ENCODE measurements at regions of chr19 and their contacts with region 1.

Region 1: DNA sequence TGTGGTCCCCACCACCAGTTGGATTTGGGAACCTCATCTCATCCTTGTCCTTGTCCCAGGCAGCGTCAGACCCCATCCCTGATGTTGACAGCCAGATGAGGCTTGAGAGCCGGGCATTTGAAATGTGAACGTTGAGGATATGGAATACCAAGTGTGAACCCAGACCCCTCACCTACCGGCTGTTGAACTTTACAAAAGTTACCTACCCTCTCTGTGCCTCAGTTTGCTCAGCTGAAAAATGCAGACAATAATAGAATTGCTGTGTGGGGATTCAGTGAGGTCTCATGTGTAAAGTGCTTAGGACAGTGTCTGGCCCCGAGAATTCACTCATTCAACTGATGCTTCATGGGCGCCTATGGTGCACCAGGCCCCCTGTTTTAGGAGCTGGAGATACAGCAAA is 693 bp upstream of the SIGLEC14 start:
- DNase-seq: no peak
- ATAC-seq: no peak
- H3K4me3 ChIP-seq: no peak overlapping the region
- H3K4me3 Mint-ChIP-seq: no peak overlapping the region
- H3K27ac ChIP-seq: peak overlapping the region; percentile 20
- H3K27ac Mint-ChIP-seq: no peak overlapping the region
- H3K4me1 ChIP-seq: peaks cover 29% of the 10 kb centered on the region
- H3K4me1 Mint-ChIP-seq: peaks cover 0 to 7% of the 10 kb centered on the region in 2 donors
- H3K27me3 ChIP-seq: no peaks in the 10 kb centered on the region
- H3K27me3 Mint-ChIP-seq: peaks cover 20 to 40% of the 10 kb centered on the region in 2 donors
- CTCF ChIP-seq: no peak

Region 2: GRCh38 chr19:51627491-51628138 is 19.7 kb before region 1 on chr19:
- intact Hi-C with region 1: loop called (anchors 2 kb)
- DNase-seq: no peak
- ATAC-seq: no peak
- H3K4me3 ChIP-seq: no peak overlapping the region
- H3K4me3 Mint-ChIP-seq: no peak overlapping the region
- H3K27ac ChIP-seq: no peak overlapping the region
- H3K27ac Mint-ChIP-seq: no peak overlapping the region
- H3K4me1 ChIP-seq: peaks cover 8% of the 10 kb centered on the region
- H3K4me1 Mint-ChIP-seq: peaks cover 0 to 8% of the 10 kb centered on the region in 2 donors
- H3K27me3 ChIP-seq: no peaks in the 10 kb centered on the region
- H3K27me3 Mint-ChIP-seq: peaks cover 0 to 3% of the 10 kb centered on the region in 2 donors
- CTCF ChIP-seq: no peak

Measured in natural killer cell (primary cell).